Activated T-helper 1 cell treated with anti-CD3 and anti-CD28 coated beads, Interleukin-12 subunit alpha, Interleukin-12 subunit beta, Interleukin-2, Interleukin-4 antibody, amounts not matched to agents 30 ng/mL and 10 ng/mL and 1 ng/mL, durations not matched to agents 14 hours and 24 hours and 36 hours (primary cell): ENCODE measurements at regions of chr9 and their contacts with region 1.

Region 1: GRCh38 chr9:127450830-127451724 is at the starts of genes LRSAM1 and RPL12:
- DNase-seq: peak; percentile 96
- H3K4me3 Mint-ChIP-seq: peak within 1 kb of the TSS; percentile 92
- H3K27ac Mint-ChIP-seq: peak within 1 kb of the TSS; percentile 98
- H3K4me1 Mint-ChIP-seq: peaks cover 55% of the 10 kb centered on the region
- H3K27me3 Mint-ChIP-seq: no peaks in the 10 kb centered on the region
- total RNA-seq, gene LRSAM1: 23.8 and 25.8 TPM in 2 replicates
- total RNA-seq, gene RPL12: 1,157 and 1,162 TPM in 2 replicates

Region 2: DNA sequence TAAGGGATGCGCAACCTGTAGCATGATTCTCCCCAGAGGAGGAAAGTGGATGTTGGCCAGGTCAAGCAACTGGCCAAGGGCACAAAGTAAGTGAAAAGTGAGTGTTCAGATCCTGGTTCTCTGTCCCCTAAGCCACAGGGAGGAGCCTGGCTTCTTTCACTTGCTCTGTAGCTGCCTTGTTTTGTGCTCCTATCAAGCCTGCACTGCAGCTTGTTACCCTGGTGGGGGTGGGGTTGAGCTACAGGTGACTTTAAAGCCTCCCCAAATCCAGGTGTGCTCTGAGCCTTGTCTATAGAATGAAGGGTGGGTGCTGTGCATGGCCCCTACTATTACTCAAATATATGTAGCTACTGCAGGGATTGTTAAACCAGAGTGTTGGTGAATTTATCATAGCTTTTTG is 503.5 kb before region 1 on chr9:
- intact Hi-C with region 1: loop called (anchors 10 kb)
- DNase-seq: no peak
- H3K4me3 Mint-ChIP-seq: no peak overlapping the region
- H3K27ac Mint-ChIP-seq: no peak overlapping the region
- H3K4me1 Mint-ChIP-seq: no peaks in the 10 kb centered on the region
- H3K27me3 Mint-ChIP-seq: peaks cover 20% of the 10 kb centered on the region

Region 3: GRCh38 chr9:127244609-127245601 is 206.2 kb before region 1 on chr9:
- intact Hi-C with region 1: loop called (anchors 1 kb)
- DNase-seq: peak; percentile 94
- H3K4me3 Mint-ChIP-seq: peak overlapping the region; percentile 83
- H3K27ac Mint-ChIP-seq: peak overlapping the region; percentile 21
- H3K4me1 Mint-ChIP-seq: peaks cover 12% of the 10 kb centered on the region
- H3K27me3 Mint-ChIP-seq: peaks cover 9% of the 10 kb centered on the region

Region 4: GRCh38 chr9:127311239-127311741 is 139.8 kb before region 1 on chr9:
- intact Hi-C with region 1: loop called (anchors 1 kb)
- DNase-seq: no peak
- H3K4me3 Mint-ChIP-seq: no peak overlapping the region
- H3K27ac Mint-ChIP-seq: no peak overlapping the region
- H3K4me1 Mint-ChIP-seq: no peaks in the 10 kb centered on the region
- H3K27me3 Mint-ChIP-seq: peaks cover 29% of the 10 kb centered on the region

Region 5: DNA sequence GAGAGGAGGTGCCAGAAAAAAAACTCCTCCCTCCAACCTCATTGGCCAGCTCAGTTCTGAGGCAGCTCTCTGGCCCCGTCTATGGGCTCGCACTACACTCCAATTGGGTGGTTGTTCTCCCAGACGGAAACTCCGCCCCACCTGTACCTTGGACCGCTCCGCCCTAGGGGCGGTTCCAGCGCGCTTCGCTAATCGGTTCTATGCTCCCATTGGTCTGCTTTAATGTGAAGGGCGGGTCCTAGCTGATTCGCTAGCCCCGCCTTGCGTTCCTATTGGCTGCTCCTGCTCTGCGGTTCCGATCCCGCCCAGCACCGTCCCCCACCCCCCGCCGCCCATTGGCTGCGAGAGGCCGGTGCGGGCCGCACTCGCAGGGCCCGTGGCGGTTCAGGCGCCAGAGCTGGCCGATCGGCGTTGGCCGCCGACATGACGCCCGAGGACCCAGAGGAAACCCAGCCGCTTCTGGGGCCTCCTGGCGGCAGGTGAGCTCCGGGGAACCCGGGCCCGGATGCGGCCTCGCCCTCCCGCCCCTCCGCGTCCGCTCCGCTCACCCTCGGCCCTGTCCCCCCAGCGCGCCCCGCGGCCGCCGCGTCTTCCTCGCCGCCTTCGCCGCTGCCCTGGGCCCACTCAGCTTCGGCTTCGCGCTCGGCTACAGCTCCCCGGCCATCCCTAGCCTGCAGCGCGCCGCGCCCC is 54.1 kb before region 1 on chr9 and contains the start of gene SLC2A8:
- intact Hi-C with region 1: loop called (anchors 1 kb)
- DNase-seq: peak; percentile 96
- H3K4me3 Mint-ChIP-seq: peak within 1 kb of the TSS; percentile 79
- H3K27ac Mint-ChIP-seq: no peak within 1 kb of the TSS
- H3K4me1 Mint-ChIP-seq: peaks cover 18% of the 10 kb centered on the region
- H3K27me3 Mint-ChIP-seq: peaks cover 57% of the 10 kb centered on the region
- total RNA-seq, gene SLC2A8: 10.4 and 11.6 TPM in 2 replicates

Region 6: GRCh38 chr9:127568971-127569885 is 118.2 kb after region 1 on chr9:
- intact Hi-C with region 1: loop called (anchors 1 kb)
- DNase-seq: peak; percentile 78
- H3K4me3 Mint-ChIP-seq: peak overlapping the region; percentile 85
- H3K27ac Mint-ChIP-seq: peak overlapping the region; percentile 87
- H3K4me1 Mint-ChIP-seq: peaks cover 49% of the 10 kb centered on the region
- H3K27me3 Mint-ChIP-seq: no peaks in the 10 kb centered on the region

Region 7: DNA sequence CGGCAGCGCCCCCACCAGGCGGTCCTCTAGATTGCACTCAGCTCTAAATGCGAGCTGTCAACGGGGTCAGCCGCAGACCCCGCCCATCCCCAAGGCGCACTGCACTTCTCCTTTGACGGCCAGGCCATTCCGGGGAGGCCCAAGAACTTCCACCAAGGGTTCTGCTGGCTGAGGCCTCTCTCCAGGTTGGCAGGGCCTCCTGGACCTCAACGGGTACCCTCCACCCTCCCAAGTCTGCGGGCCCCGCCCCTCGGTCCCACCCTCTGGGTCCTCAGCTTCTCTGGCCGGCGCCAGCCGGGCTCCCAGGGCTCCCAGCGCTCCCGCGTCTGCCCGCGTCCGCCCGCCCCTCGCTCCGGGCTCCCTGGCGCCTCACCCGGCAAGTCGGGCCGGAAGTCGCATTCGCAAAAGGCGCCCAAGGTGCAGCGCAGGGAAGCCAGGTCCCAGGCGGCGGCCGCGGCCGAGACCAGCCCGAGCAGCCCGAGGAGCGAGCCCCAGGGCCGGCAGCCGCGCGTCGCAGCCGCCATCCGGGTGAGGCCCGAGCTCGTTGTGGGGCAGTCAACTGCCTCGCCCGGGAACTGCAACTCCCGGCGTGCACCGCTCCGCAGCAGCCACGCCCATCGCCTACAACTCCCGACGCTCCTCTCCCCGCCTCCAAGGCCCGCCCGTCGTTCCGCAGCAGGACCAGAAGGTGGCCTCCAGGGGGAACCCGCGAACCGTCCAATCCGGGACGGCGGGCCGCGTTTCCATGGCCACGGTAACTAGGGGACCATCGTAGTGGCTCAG is 283.9 kb after region 1 on chr9 and contains the start of gene TOR2A:
- intact Hi-C with region 1: loop called (anchors 1 kb)
- DNase-seq: peak; percentile 98
- H3K4me3 Mint-ChIP-seq: peak within 1 kb of the TSS; percentile 89
- H3K27ac Mint-ChIP-seq: peak within 1 kb of the TSS; percentile 96
- H3K4me1 Mint-ChIP-seq: peaks cover 15% of the 10 kb centered on the region
- H3K27me3 Mint-ChIP-seq: no peaks in the 10 kb centered on the region
- total RNA-seq, gene TOR2A: 16.6 and 18.9 TPM in 2 replicates

Region 8: DNA sequence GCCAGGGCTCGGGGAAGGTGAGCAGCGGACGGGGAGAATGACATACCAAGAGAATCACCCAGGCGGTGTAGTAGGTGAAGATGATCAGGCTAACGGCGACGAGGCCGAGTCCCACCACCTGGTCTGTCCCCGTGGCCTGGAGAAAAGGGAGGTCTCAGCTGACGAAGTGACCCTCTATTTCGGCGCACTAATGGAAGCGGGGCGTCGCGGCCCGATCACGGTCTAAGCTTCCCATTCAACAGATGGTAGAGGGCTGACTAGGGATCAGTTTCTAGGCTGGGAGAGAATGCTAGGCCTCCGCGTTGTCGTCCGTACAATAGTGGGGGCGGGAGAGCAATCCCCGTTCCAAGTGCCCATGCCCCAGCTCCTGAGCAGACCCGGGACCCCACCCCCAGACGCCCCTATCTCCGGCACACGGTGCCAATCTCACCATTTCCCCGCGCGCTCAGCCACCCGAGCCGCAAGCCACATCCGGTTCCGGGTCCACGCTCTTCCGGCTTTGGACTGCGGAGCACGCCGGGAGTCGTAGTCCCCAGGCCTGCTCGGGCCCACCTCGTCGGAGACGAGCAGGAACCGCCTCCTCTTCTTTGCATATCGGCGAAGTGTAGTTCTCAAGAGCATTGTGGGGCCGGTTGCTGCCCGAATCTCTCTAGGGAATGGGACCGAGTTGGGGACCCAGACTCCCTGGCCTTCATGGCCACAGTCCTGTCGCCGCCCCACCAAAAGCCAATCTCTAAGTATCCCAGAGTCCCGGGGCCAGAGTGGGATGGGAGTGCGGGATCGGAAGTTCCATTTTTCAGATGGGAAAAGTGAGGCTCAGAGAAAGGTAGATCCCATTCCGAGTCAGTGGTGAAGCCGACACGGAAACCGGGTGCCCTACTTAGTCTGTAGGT is 486.6 kb after region 1 on chr9 and contains the start of gene DPM2:
- intact Hi-C with region 1: no loop called
- DNase-seq: peak; percentile 82
- H3K4me3 Mint-ChIP-seq: peak within 1 kb of the TSS; percentile 92
- H3K27ac Mint-ChIP-seq: peak within 1 kb of the TSS; percentile 91
- H3K4me1 Mint-ChIP-seq: peaks cover 37% of the 10 kb centered on the region
- H3K27me3 Mint-ChIP-seq: peaks cover 2% of the 10 kb centered on the region
- total RNA-seq, gene DPM2: 62.6 and 70.2 TPM in 2 replicates